ENCODE measurements at regions of chr1 and their contacts with region 1.

Region 1: GRCh38 chr1:234499119-234499942 is 20.4 kb upstream of the TARBP1 start:
- DNase-seq: peak; percentile 86 to 87
- ATAC-seq: peak; percentile 93 to 94
- H3K4me3 ChIP-seq: no peak overlapping the region
- H3K27ac ChIP-seq: peak overlapping the region; percentile 88 to 94
- H3K4me1 ChIP-seq: peaks cover 74% of the 10 kb centered on the region
- CTCF ChIP-seq: peak; percentile 95
- EP300 ChIP-seq: no peak
- POLR2A ChIP-seq: no peak
- RAD21 ChIP-seq: peak; percentile 98 to 100

Region 2: DNA sequence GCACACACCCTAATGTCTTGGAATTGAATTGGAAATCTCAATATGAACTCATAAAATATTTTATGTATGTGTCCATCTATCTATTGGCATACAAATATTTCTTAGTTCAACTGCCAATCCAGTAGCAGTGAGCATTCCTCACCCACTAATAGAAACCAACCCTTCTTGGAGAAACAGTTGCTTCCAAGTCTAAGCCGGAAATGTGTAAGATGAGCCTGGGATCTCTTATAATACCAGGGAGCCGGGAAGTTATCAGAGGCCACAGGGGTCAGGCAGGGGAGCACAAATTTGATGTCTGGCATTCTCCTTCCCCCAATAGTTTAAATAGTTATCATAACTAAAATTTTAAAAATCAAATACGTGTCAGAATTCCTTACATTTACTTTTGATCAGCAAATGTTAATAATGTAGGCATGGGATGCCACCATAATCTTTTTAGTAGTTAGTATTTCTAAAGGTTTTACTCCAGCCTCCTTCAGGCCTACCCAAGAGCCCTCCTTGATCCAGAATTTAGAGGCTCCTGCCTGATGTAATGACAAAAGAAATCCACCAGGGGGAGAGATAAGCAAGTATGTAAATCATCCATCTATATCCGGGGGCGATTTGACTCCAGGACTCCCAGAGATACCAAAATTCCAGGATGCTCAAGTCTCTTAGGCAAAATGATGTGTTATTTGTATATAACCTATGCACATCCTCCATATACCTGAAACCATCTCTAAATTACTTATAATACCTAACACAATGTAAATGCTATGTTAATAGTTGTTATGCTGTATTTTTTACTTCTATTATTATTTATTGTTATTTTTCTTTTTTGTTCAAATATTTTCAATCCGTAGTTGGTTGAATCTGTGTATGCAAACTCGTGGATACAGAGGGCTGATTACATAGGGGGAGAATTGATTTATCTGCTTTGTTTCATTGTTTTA is 344.7 kb before region 1 on chr1:
- CTCF ChIA-PET with region 1: no interaction called
- POLR2A ChIA-PET with region 1: no interaction called
- DNase-seq: peak; percentile 51 to 87
- ATAC-seq: peak; percentile 94 to 96; a peak in 5 of 6 replicates
- H3K4me3 ChIP-seq: no peak overlapping the region
- H3K27ac ChIP-seq: peak overlapping the region; percentile 44 to 62
- H3K4me1 ChIP-seq: peaks cover 9% of the 10 kb centered on the region; the same call in 1 of the 3 replicates
- CTCF ChIP-seq: peak; percentile 75
- EP300 ChIP-seq: no peak
- POLR2A ChIP-seq: no peak
- RAD21 ChIP-seq: peak; percentile 74 to 82

Region 3: DNA sequence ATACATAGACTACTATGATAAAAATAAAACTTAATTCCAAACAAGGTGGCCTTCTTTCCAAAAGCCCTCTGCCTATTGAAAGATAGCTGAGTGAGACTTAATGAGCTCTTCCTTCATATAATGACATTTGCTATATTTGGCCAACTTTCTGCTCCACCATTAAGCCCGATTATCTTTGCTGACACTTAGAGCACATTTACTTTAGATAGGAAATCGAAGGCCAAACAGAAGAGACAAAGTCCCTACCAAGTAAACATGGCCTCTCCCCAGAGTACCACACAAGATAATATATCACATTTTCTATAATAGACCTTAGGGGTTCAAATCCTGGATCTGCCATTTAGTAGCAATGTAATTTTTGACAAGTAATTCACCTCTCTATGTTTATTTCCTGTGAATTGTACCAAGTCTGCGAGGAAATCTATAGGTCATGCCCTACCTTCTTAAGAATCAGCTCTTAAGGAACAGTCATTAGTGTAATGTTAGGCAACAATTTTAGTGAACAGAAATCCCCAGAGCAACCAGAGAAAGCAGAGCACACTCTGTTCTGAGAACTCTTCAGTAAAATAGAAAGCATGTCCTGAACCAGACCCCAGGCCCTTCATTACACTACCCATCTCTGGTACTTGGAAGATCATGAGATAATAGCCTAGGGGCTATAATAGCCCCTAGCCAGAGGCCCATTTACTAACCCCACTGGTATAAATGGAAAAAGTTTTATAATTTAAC is 143.4 kb before region 1 on chr1:
- CTCF ChIA-PET with region 1: no interaction called
- POLR2A ChIA-PET with region 1: no interaction called
- DNase-seq: no peak
- ATAC-seq: 0 out of 6 replicates have a peak, but pooled peaks of 1 of the 2 experiments have one; percentile 27
- H3K4me3 ChIP-seq: peak overlapping the region; percentile 49
- H3K27ac ChIP-seq: peak overlapping the region; percentile 74 to 81; a peak in 3 of 6 replicates
- H3K4me1 ChIP-seq: no peaks in the 10 kb centered on the region
- CTCF ChIP-seq: no peak
- EP300 ChIP-seq: no peak
- POLR2A ChIP-seq: no peak
- RAD21 ChIP-seq: no peak

Region 4: GRCh38 chr1:234478481-234479309 is 20.6 kb before region 1 on chr1 and contains the start of gene TARBP1:
- CTCF ChIA-PET with region 1: interaction called, 31 read pairs
- POLR2A ChIA-PET with region 1: interaction called, 10 read pairs
- DNase-seq: peak; percentile 77 to 86
- ATAC-seq: peak; percentile 85 to 92
- H3K4me3 ChIP-seq: peak within 1 kb of the TSS; percentile 63
- H3K27ac ChIP-seq: peak within 1 kb of the TSS; percentile 87 to 97
- H3K4me1 ChIP-seq: peaks cover 20% of the 10 kb centered on the region
- CTCF ChIP-seq: peak; percentile 37
- EP300 ChIP-seq: no peak
- POLR2A ChIP-seq: peak; percentile 78
- RAD21 ChIP-seq: no peak; a peak in 1 of 5 replicates
- polyA plus RNA-seq, gene TARBP1: 41.1 and 44.7 TPM in 2 replicates

Region 5: GRCh38 chr1:234509452-234510328 is 10.4 kb after region 1 on chr1:
- CTCF ChIA-PET with region 1: interaction called, 26 read pairs
- POLR2A ChIA-PET with region 1: interaction called, 3 read pairs
- DNase-seq: peak in 1 of 2 experiments; percentile 50
- ATAC-seq: peak; percentile 59 to 72; a peak in 5 of 6 replicates
- H3K4me3 ChIP-seq: no peak overlapping the region
- H3K27ac ChIP-seq: peak overlapping the region; percentile 78 to 94
- H3K4me1 ChIP-seq: peaks cover 46% of the 10 kb centered on the region
- CTCF ChIP-seq: no peak
- EP300 ChIP-seq: no peak
- POLR2A ChIP-seq: no peak
- RAD21 ChIP-seq: no peak

Region 6: DNA sequence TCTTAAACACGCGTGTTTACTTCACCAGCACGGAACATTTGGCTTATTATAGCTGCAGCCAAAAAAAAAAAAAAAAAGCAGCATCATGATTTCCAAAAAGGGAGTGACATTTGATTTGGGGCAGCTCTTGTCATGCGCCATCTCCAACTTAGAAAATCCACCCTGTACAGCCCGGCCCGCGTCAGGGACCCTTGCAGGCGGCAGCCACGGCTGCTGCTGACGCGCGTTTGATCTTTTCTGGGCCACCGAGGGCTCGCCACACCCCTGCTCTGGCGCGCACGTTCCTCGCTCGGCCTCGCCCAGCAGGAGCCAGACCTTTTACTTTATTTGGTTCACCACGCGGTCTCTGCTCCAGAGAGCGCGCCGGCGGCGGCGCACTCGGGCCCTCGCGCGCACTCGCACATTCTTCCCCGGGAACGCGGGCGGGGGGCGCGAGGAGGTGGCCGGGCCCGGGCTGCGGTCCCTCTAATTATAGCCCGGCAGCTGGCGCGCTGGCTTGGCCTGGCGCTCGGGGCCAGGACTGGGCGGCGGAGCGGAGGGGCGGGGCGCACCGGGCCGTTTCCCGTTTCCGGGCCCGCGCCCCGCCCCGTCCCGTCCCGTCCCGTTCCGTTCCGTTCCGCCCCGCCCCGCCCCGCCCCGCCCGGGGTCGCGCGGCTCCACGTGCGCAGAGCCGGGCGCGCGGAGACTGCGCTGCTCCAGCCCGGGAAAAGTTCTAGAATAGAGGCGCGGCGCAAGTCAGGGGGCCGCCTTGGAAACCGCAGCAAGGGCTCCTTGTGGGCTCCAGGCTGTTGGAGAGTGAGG is 100.5 kb after region 1 on chr1:
- CTCF ChIA-PET with region 1: interaction called, 76 read pairs
- POLR2A ChIA-PET with region 1: interaction called, 12 read pairs
- DNase-seq: peak; percentile 65 to 87
- ATAC-seq: peak; percentile 77 to 88
- H3K4me3 ChIP-seq: peak overlapping the region; percentile 49
- H3K27ac ChIP-seq: peak overlapping the region; percentile 94 to 96
- H3K4me1 ChIP-seq: peaks cover 58% of the 10 kb centered on the region
- CTCF ChIP-seq: 0 out of 3 replicates have a peak, but pooled peaks have one; percentile 5
- EP300 ChIP-seq: no peak; a peak in 1 of 5 replicates
- POLR2A ChIP-seq: peak; percentile 34
- RAD21 ChIP-seq: peak in 1 of 2 experiments; percentile 53; a peak in 3 of 5 replicates

Region 7: DNA sequence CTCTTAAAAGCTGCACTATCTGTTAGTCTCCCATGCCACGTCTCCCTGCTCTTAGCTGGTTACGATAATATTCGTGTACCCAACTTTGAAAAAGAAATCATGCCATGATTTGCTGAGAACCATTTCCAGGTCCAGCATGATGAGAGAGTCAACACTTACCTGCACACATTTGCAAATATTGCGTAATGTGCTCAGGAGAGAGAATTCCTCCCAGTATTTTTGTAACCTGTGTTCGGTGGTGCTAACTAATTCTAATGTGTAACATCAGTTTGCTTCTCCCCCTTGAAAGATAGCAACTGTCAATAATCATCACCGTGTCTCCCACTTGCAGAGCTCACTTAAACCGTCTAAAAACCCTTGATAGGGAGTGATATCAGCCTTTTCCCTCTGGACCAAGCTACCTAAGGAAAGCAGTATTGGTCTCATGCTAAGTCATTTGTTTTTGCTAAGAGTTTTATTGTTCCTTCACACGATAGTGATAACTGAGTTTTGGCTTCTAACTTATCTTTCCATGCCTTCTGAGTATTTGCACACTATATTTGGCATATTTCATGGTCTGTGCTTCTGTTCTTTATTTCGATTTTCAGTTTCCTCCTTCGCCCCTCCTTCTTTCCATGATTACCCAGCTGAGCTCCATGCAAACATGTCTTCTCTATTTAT is 171.8 kb after region 1 on chr1:
- CTCF ChIA-PET with region 1: no interaction called
- POLR2A ChIA-PET with region 1: no interaction called
- DNase-seq: no peak
- ATAC-seq: no peak
- H3K4me3 ChIP-seq: no peak overlapping the region
- H3K27ac ChIP-seq: 0 out of 6 replicates have a peak overlapping the region, but pooled peaks of 1 of the 2 experiments have one; percentile 21
- H3K4me1 ChIP-seq: 0 out of 3 replicates have a peak, but pooled peaks cover 4% of the 10 kb centered on the region
- CTCF ChIP-seq: no peak
- EP300 ChIP-seq: no peak
- POLR2A ChIP-seq: no peak
- RAD21 ChIP-seq: no peak

Region 8: DNA sequence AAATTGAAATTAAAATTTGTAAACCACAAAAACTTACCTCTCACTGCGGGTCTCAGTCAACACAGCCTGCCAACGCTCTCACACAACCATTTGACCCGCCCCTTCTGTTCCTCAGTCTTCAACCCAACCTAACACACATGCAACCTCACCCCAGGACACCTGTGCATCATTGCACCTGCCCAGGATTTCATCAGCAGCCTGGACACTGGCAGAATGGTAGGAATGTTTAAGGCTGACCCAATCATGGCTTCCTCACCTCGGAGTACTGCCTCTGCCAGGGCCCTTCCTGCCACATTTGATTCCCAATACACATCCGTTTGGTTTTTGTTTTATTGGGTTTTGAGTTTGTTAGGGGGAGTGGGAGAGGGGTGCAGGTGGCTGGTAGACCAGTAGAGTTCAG is 588.6 kb after region 1 on chr1:
- CTCF ChIA-PET with region 1: interaction called, 48 read pairs
- POLR2A ChIA-PET with region 1: interaction called, 9 read pairs
- DNase-seq: no peak
- ATAC-seq: no peak
- H3K4me3 ChIP-seq: no peak overlapping the region
- H3K27ac ChIP-seq: peak overlapping the region in 1 of 2 experiments; percentile 34; a peak in 3 of 6 replicates
- H3K4me1 ChIP-seq: peaks cover 18% of the 10 kb centered on the region
- CTCF ChIP-seq: no peak
- EP300 ChIP-seq: no peak
- POLR2A ChIP-seq: no peak
- RAD21 ChIP-seq: no peak

Region 9: DNA sequence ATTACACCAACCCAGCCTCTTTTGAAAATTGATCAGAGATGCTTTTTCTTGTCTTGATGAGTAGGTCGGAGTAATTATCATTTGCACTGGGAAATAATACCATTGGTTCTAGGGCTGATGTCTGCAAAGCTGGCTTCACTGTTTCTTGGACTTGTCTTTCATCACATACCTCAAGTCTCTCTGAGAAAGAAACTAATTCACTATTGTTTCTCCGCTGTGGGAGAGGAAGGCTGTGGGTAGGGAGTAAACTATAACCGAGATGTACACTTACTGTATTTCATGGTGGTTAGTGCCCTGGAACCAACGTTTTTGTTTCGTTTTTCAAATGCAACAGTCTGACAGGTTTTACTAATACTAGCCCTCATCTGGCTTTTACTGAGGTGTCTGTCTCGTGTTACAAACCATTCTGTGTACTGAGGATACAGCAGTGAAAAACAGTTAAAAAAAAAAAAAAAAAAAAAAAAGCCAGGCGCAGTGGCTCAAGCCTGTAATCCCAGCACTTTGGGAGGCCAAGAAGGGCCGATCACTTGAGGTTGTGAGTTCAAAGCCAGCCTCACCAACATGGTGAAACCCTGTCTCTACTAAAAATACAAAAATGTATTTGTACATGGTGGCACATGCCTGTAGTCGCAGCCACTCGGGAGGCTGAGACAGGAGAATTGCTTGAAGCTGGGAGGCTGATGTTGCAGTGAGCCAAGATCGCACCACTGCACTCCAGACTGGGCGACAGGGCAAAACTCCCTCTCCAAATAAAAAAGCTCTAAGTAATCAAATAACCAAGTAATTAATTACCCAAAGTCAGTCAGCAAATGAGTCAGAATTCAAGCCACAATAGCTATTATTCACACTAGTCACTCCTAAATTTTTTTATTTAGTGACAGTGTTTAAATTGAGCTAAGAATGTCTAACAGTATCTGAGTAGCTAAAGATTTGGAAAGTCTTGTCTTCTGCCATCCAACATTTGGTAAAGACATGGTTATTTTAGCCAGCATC is 606.0 kb after region 1 on chr1:
- CTCF ChIA-PET with region 1: interaction called, 3 read pairs
- POLR2A ChIA-PET with region 1: interaction called, 12 read pairs
- DNase-seq: no peak
- ATAC-seq: peak; percentile 15 to 22; a peak in 4 of 6 replicates
- H3K4me3 ChIP-seq: no peak overlapping the region
- H3K27ac ChIP-seq: no peak overlapping the region; a peak in 1 of 6 replicates
- H3K4me1 ChIP-seq: peaks cover 9% of the 10 kb centered on the region; the same call in 2 of the 3 replicates
- CTCF ChIP-seq: no peak
- EP300 ChIP-seq: no peak
- POLR2A ChIP-seq: no peak
- RAD21 ChIP-seq: no peak

Measured in A549 (cell line).